ENCODE measurements at regions of chr1 and their contacts with region 1.

Region 1: GRCh38 chr1:192808518-192809306 is at the start of gene RGS2:
- DNase-seq: peak; percentile 60
- H3K4me3 ChIP-seq: peak within 1 kb of the TSS; percentile 79
- H3K27me3 ChIP-seq: no peaks in the 10 kb centered on the region
- CTCF ChIP-seq: no peak
- polyA plus RNA-seq, gene RGS2: 11.5 and 26.0 TPM in 2 replicates

Region 2: GRCh38 chr1:192766009-192766625 is 42.6 kb before region 1 on chr1:
- CTCF ChIA-PET with region 1: interaction called, 13 read pairs
- POLR2A ChIA-PET with region 1: no interaction called
- DNase-seq: no peak
- H3K4me3 ChIP-seq: no peak overlapping the region
- H3K27me3 ChIP-seq: no peaks in the 10 kb centered on the region
- CTCF ChIP-seq: no peak

Region 3: DNA sequence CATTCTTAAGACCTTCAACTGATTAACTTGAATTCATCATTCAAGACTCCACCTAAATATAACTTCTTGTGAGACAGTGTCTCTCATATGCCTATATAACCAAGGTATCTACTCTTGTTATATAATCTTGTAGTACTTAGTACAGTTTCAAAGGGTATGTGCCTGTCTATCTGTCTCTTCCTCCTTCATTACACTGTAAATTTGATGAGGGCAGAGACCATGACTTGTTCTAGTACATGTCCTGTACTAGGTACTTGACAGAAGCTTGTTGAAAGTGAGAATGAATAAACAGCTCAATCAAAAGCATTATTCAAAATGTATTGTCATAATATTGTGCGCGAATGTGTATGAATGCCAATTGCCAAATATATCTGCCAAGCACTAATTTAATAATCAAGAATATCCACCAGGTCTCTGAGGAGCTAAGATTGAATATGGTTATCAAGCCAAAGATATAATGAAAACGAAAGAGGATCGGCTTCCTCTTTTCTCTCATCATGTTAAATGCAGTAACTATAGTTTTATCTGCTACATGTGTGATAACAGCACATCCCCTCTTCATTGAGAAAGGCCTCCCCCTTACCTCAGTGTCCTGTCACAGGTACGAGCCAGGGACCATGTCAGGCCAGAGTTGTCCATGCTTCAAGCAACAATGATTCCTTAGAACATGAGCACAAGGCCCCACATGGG is 133.2 kb after region 1 on chr1:
- CTCF ChIA-PET with region 1: no interaction called
- POLR2A ChIA-PET with region 1: no interaction called
- DNase-seq: no peak
- H3K4me3 ChIP-seq: no peak overlapping the region
- H3K27me3 ChIP-seq: no peaks in the 10 kb centered on the region
- CTCF ChIP-seq: no peak

Region 4: DNA sequence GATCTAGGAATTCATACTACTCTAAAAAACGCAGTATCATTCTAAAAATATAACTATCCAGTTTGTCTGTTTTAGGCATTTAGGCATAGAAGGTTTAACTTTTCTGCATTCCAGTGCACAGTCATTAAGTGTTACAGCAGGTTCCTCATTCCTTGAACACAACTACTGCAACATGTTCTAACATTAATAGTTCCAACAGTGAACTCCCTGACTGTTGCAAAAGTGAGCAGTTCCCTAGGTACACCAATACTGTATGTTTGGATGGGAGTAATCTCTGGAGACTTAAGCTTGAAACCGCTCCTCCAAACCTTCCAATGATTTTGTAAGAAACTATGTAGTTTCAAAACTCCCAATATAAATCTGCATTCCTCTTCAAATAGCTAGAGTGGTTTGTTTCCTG is 204.3 kb after region 1 on chr1:
- CTCF ChIA-PET with region 1: interaction called, 61 read pairs
- POLR2A ChIA-PET with region 1: no interaction called
- DNase-seq: no peak
- H3K4me3 ChIP-seq: no peak overlapping the region
- H3K27me3 ChIP-seq: no peaks in the 10 kb centered on the region
- CTCF ChIP-seq: no peak

Region 5: GRCh38 chr1:193019442-193020026 is 210.8 kb after region 1 on chr1:
- CTCF ChIA-PET with region 1: interaction called, 61 read pairs
- POLR2A ChIA-PET with region 1: no interaction called
- DNase-seq: no peak
- H3K4me3 ChIP-seq: no peak overlapping the region
- H3K27me3 ChIP-seq: no peaks in the 10 kb centered on the region
- CTCF ChIP-seq: peak; percentile 37; the same call in 1 of the 2 replicates

Measured in BJ (cell line).